ENCODE measurements at regions of chr3 and their contacts with region 1.

Region 1: DNA sequence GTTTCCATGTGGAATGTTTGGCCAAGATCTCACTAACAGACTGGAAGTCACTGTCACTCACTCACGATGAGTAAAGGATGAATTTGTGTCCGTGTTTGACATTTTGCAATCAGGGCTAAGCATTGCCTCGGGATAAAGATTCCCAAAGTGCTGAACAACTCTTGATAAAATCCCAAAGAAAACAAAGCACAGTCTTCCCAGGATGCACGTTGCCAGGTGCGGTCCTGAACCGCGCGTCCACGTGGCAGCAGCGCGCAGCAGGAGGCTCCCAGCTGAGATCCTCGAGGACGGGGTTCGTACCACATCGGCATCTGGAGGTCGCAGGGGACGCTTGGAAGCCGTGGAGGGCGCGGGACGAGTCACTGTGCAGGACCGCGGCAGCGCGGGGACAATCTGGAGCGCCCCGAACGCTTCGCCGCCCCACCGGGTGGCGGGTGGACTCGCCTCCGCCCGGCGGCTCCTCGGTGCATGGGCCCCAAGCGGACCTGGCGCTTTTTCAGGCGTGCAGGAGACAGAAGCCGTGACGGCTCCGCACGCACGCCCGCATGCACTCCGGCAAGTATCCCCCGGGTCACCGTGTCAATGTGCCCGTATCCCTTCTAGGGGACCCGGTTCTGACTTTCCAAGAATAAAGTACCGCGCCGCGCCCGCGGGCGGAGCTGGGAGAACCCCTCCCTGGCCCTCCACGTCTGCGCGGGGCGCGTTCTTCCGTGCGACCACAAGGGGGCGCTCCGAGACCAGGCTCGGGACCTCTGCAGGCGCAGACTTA is 17.7 kb downstream of the CPN2 start:
- DNase-seq: peak; percentile 86
- H3K4me3 Mint-ChIP-seq: peak overlapping the region; percentile 73
- H3K27ac Mint-ChIP-seq: no peak overlapping the region
- H3K4me1 Mint-ChIP-seq: peaks cover 13% of the 10 kb centered on the region
- H3K27me3 Mint-ChIP-seq: peaks cover 21% of the 10 kb centered on the region

Region 2: DNA sequence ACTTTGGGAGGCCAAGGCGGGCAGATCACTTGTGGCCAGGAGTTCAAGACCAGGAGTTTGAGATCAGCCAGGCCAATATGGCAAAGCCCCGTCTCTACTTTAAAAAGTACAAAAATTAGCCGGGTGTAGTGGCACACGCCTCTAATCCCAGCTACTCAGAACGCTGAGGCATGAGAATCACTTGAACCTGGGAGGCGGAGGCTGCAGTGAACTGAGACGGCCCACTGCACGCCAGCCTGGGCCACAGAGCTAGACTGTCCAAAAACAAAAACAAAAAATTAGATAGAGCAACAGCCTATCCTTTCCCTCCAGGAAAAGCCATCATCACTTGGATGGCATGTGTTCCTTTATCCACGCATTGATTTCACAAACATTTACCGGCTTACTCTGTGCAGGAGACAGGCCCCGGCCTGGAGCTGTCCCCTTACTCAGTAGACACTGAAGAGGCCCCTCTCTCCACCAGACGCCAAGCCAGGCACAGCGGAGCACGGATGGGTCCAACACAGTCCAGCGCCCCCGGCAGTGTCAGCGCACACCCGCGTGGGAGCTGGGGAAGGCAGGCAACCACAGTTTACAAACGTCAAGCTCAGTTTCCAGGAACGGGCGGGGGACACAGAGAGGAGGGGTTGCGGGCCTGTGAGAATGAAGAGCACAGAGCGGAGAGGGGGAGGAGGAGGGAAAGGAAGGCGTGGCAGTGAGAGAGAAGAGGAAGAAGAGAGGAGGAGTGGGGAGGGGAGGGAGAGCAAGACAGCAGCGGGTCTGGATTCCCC is 62.6 kb after region 1 on chr3:
- intact Hi-C with region 1: loop called (anchors 1 kb)
- DNase-seq: peak; percentile 67
- H3K4me3 Mint-ChIP-seq: peak overlapping the region; percentile 76
- H3K27ac Mint-ChIP-seq: peak overlapping the region; percentile 53
- H3K4me1 Mint-ChIP-seq: peaks cover 57% of the 10 kb centered on the region
- H3K27me3 Mint-ChIP-seq: peaks cover 4% of the 10 kb centered on the region

Region 3: GRCh38 chr3:194472290-194472920 is 139.0 kb after region 1 on chr3:
- intact Hi-C with region 1: loop called (anchors 5 kb)
- DNase-seq: peak; percentile 16
- H3K4me3 Mint-ChIP-seq: no peak overlapping the region
- H3K27ac Mint-ChIP-seq: no peak overlapping the region
- H3K4me1 Mint-ChIP-seq: peaks cover 12% of the 10 kb centered on the region
- H3K27me3 Mint-ChIP-seq: no peaks in the 10 kb centered on the region

Region 4: DNA sequence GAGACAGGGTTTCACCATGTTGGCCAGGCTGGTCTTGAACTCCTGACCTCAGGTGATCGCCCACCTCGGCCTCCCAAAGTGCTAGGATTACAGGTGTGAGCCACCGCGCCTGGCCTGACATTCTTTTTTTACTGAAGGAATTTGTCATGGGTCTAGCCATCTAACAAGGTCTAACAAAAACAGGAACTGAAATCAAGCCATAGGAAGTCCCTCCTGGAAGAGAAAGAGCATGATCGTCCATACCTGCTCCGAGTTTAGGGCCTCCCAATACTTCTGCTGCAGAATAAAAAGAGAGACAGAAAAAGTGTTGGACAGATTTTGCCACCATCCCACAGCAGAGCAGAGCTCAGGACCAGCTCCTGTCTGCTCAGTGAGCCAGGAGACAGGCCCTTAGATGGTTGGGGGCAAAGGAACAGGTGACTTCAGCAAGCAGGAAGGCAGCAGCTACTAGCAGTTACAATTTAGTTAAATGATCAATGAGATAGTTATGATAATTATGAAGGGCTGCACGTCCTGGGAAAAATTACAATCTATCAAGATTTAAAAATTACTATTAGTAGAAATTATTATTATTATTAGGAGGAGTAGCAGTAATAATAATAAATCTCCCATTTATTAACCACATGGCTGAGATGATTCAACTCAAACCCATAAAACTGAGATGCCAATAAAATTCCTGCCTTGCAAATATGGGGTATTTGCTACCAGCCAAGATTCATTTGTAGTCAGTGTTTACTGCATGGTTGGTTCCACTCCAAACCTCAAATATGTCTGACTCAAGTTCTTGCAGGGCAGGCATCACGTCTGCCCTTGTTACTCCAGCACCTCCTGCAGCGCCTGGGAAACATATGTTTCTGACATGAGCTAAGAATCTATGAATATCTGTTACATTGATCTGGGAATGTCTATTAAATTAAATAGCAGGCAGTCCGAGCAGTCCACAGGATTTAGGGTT is 259.7 kb after region 1 on chr3:
- intact Hi-C with region 1: loop called (anchors 1 kb)
- DNase-seq: no peak
- H3K4me3 Mint-ChIP-seq: no peak overlapping the region
- H3K27ac Mint-ChIP-seq: no peak overlapping the region
- H3K4me1 Mint-ChIP-seq: peaks cover 5% of the 10 kb centered on the region
- H3K27me3 Mint-ChIP-seq: no peaks in the 10 kb centered on the region

Measured in activated T-helper 1 cell treated with anti-CD3 and anti-CD28 coated beads, Interleukin-12 subunit alpha, Interleukin-12 subunit beta, Interleukin-2, Interleukin-4 antibody, amounts not matched to agents 30 ng/mL and 10 ng/mL and 1 ng/mL, durations not matched to agents 14 hours and 24 hours and 36 hours (primary cell).